Caco-2 (cell line): ENCODE measurements at regions of chr17 and their contacts with region 1.

Region 1: GRCh38 chr17:82551779-82552457 is 32.4 kb downstream of the FOXK2 start:
- DNase-seq: peak; percentile 81 to 88
- H3K4me3 ChIP-seq: no peak overlapping the region
- H3K4me3 Mint-ChIP-seq: no peak overlapping the region
- H3K27ac Mint-ChIP-seq: peak overlapping the region; percentile 26
- H3K4me1 ChIP-seq: peaks cover 10% of the 10 kb centered on the region; the same call in 1 of the 2 replicates
- H3K4me1 Mint-ChIP-seq: peaks cover 16% of the 10 kb centered on the region
- H3K27me3 ChIP-seq: no peaks in the 10 kb centered on the region
- H3K27me3 Mint-ChIP-seq: no peaks in the 10 kb centered on the region
- CTCF ChIP-seq: peak; percentile 78 to 91

Region 2: GRCh38 chr17:82494236-82495055 is 57.5 kb before region 1 on chr17:
- CTCF ChIA-PET with region 1: interaction called, 6 read pairs
- POLR2A ChIA-PET with region 1: interaction called, 6 read pairs
- intact Hi-C with region 1: loop called (anchors 1 kb)
- DNase-seq: peak; percentile 90 to 94
- H3K4me3 ChIP-seq: no peak overlapping the region
- H3K4me3 Mint-ChIP-seq: peak overlapping the region; percentile 67
- H3K27ac Mint-ChIP-seq: peak overlapping the region; percentile 93
- H3K4me1 ChIP-seq: peaks cover 19% of the 10 kb centered on the region
- H3K4me1 Mint-ChIP-seq: peaks cover 12% of the 10 kb centered on the region
- H3K27me3 ChIP-seq: no peaks in the 10 kb centered on the region
- H3K27me3 Mint-ChIP-seq: peaks cover 4% of the 10 kb centered on the region
- CTCF ChIP-seq: peak; percentile 86 to 97

Region 3: DNA sequence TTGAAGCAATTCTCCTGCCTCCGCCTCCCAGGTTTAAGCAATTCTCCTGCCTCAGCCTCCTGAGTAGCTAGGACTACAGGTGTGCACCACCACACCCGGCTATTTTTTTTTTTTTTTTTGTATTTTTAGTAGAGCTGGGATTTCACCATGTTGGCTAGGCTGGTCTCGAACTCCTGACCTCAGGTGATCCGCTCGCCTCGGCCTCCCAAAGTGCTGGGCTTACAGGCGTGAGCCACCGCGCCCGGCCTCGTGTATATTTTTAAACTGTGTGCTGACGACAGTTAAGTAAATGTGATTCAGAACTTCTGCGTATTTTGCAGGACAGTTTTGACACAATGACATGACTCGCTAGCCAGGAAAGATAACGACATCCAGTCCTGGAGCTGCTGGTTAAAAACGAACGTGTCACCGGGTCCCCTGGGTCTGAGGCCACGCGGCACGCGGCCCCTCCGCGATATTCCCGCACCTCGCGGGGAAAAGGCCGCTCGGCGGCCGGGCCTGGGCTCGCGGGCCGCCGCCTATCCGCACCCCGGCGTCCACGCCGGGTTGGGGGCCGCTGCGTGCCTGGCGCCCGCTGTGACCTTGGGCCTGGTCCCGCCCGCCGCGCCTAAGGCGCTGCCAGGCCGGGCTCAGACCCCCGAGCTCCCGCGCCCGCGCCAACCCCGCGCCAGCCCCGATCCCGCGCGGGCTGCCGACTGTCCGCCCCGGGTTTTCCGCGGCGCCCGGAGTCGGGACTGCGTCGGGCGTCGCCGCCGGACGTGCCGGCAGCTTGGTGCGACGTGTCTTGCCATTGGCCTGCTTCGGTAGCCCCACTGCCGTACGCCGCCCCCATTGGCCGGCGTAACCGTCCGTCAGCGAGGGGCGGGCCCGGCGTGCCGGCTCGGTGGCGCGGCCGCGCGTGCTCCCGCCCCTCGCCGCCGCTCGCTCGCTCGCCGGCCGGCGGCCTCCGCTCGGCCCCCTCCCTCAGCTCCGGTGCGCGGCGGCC is 32.8 kb before region 1 on chr17 and contains the start of gene FOXK2:
- CTCF ChIA-PET with region 1: interaction called, 8 read pairs
- POLR2A ChIA-PET with region 1: interaction called, 3 read pairs
- intact Hi-C with region 1: loop called (anchors 2 kb)
- DNase-seq: peak; percentile 96 to 99
- H3K4me3 ChIP-seq: peak within 1 kb of the TSS; percentile 93
- H3K4me3 Mint-ChIP-seq: peak within 1 kb of the TSS; percentile 97
- H3K27ac Mint-ChIP-seq: peak within 1 kb of the TSS; percentile 94
- H3K4me1 ChIP-seq: peaks cover 20% of the 10 kb centered on the region
- H3K4me1 Mint-ChIP-seq: peaks cover 17% of the 10 kb centered on the region
- H3K27me3 ChIP-seq: no peaks in the 10 kb centered on the region
- H3K27me3 Mint-ChIP-seq: no peaks in the 10 kb centered on the region
- CTCF ChIP-seq: no peak
- total RNA-seq, gene FOXK2: 118 and 124 TPM in 2 replicates

Region 4: GRCh38 chr17:82627405-82627804 is 75.5 kb after region 1 on chr17:
- CTCF ChIA-PET with region 1: no interaction called
- POLR2A ChIA-PET with region 1: no interaction called
- intact Hi-C with region 1: no loop called
- DNase-seq: no peak
- H3K4me3 ChIP-seq: no peak overlapping the region
- H3K4me3 Mint-ChIP-seq: no peak overlapping the region
- H3K27ac Mint-ChIP-seq: peak overlapping the region; percentile 45
- H3K4me1 ChIP-seq: no peaks in the 10 kb centered on the region
- H3K4me1 Mint-ChIP-seq: no peaks in the 10 kb centered on the region
- H3K27me3 ChIP-seq: no peaks in the 10 kb centered on the region
- H3K27me3 Mint-ChIP-seq: no peaks in the 10 kb centered on the region
- CTCF ChIP-seq: no peak